Transverse colon (tissue), 4 donors: ENCODE measurements at regions of chr2 and their contacts with region 1.

Region 1: DNA sequence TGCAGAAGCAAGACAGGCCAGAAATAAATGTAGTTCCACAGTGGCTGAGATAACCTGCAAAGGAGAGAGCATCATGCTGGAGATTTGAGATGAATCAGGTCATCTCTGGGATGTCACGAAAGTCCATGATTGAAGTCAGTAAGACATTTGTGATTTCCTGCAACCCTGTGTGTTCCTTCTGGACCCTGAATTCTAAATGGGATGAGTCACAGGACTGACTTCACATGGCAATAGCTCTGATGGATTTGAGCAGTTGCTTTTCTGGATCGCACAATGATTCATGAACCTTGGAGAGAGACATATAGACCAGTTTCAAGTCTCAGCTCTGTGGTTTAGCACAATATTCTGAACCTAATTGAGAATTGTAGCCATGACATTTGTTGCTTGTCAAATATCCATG is 102.9 kb downstream of the TSN start:
- DNase-seq: no peak
- H3K4me3 ChIP-seq: no peak overlapping the region
- H3K27ac ChIP-seq: no peak overlapping the region
- H3K4me1 ChIP-seq: no peaks in the 10 kb centered on the region
- H3K27me3 ChIP-seq: no peaks in the 10 kb centered on the region
- CTCF ChIP-seq: no peak
- EP300 ChIP-seq: no peak
- POLR2A ChIP-seq: no peak

Region 2: GRCh38 chr2:120699292-120699691 is 1159.1 kb before region 1 on chr2:
- in situ Hi-C with region 1: no loop called
- intact Hi-C with region 1: loop called (anchors 5 kb)
- DNase-seq: no peak
- H3K4me3 ChIP-seq: no peak overlapping the region
- H3K27ac ChIP-seq: no peak overlapping the region
- H3K4me1 ChIP-seq: no peaks in the 10 kb centered on the region
- H3K27me3 ChIP-seq: peaks cover 41% of the 10 kb centered on the region
- CTCF ChIP-seq: no peak
- EP300 ChIP-seq: no peak
- POLR2A ChIP-seq: no peak

Region 3: GRCh38 chr2:121902171-121902591 is 43.8 kb after region 1 on chr2:
- in situ Hi-C with region 1: no loop called
- intact Hi-C with region 1: no loop called
- DNase-seq: no peak
- H3K4me3 ChIP-seq: no peak overlapping the region
- H3K27ac ChIP-seq: no peak overlapping the region
- H3K4me1 ChIP-seq: peaks cover 0 to 10% (median 3%) of the 10 kb centered on the region in 4 donors
- H3K27me3 ChIP-seq: no peaks in the 10 kb centered on the region
- CTCF ChIP-seq: no peak
- EP300 ChIP-seq: no peak
- POLR2A ChIP-seq: no peak

Region 4: DNA sequence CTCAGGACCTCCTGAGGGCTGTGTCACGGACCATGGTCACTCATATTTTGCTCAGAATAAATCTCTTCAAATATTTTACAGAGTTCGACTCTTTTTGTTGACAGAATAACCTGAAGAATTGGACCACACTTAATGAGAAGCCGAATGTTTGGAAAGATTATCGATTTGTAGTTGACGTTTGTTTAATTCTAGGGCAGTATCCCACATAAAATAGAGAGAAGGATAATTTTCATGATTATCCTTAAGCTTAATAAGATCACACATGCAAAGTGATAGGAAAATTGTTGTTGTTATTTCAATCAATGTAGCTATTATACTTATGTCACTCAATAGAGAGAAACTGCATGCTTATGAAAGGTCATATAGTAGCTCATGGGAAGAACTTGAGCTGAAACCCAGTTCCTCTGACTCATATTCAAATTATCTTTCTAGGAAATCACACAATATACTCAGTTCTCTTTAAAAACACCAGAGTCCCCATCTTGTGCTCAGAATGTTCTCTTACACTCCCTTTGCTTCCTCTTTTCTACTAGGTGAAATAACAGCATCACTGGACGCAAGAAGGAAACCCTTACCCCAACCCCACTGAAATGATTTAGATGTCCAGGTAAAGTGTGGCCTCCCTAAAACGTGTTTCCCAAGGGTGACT is 879.2 kb after region 1 on chr2:
- in situ Hi-C with region 1: no loop called
- intact Hi-C with region 1: no loop called
- DNase-seq: no peak
- H3K4me3 ChIP-seq: no peak overlapping the region
- H3K27ac ChIP-seq: no peak overlapping the region
- H3K4me1 ChIP-seq: no peaks in the 10 kb centered on the region
- H3K27me3 ChIP-seq: no peaks in the 10 kb centered on the region
- CTCF ChIP-seq: no peak
- EP300 ChIP-seq: no peak
- POLR2A ChIP-seq: no peak

Region 5: GRCh38 chr2:123179526-123179925 is 1321.2 kb after region 1 on chr2:
- in situ Hi-C with region 1: no loop called
- intact Hi-C with region 1: loop called (anchors 5 kb)
- DNase-seq: no peak
- H3K4me3 ChIP-seq: no peak overlapping the region
- H3K27ac ChIP-seq: no peak overlapping the region
- H3K4me1 ChIP-seq: no peaks in the 10 kb centered on the region
- H3K27me3 ChIP-seq: no peaks in the 10 kb centered on the region
- CTCF ChIP-seq: no peak
- EP300 ChIP-seq: no peak
- POLR2A ChIP-seq: no peak